Naive thymus-derived CD4-positive, alpha-beta T cell (primary cell): ENCODE measurements at regions of chr10 and their contacts with region 1.

Region 1: GRCh38 chr10:118698421-118698820 is 56.3 kb downstream of the CACUL1 start:
- DNase-seq: peak; percentile 35 to 92 (median 88)
- ATAC-seq: peak; percentile 100
- H3K4me3 ChIP-seq: peak overlapping the region; percentile 18
- H3K4me3 Mint-ChIP-seq: peak overlapping the region; percentile 71 to 93 (median 83)
- H3K27ac ChIP-seq: peak overlapping the region; percentile 57
- H3K27ac Mint-ChIP-seq: peak overlapping the region; percentile 73 to 95 (median 90)
- H3K4me1 ChIP-seq: peaks cover 15 to 40% of the 10 kb centered on the region in 2 donors
- H3K4me1 Mint-ChIP-seq: peaks cover 29 to 89% (median 74%) of the 10 kb centered on the region in 7 donors
- H3K27me3 ChIP-seq: no peaks in the 10 kb centered on the region
- H3K27me3 Mint-ChIP-seq: no peaks in the 10 kb centered on the region

Region 2: GRCh38 chr10:118412932-118413331 is 285.5 kb before region 1 on chr10:
- CTCF ChIA-PET with region 1: no interaction called
- POLR2A ChIA-PET with region 1: no interaction called
- intact Hi-C with region 1: no loop called
- DNase-seq: no peak
- ATAC-seq: no peak
- H3K4me3 ChIP-seq: no peak overlapping the region
- H3K4me3 Mint-ChIP-seq: no peak overlapping the region
- H3K27ac ChIP-seq: no peak overlapping the region
- H3K27ac Mint-ChIP-seq: no peak overlapping the region
- H3K4me1 ChIP-seq: no peaks in the 10 kb centered on the region
- H3K4me1 Mint-ChIP-seq: peaks cover 0 to 3% (median 0%) of the 10 kb centered on the region in 7 donors
- H3K27me3 ChIP-seq: no peaks in the 10 kb centered on the region
- H3K27me3 Mint-ChIP-seq: peaks cover 14 to 46% (median 31%) of the 10 kb centered on the region in 5 donors

Region 3: GRCh38 chr10:118594392-118595063 is 103.9 kb before region 1 on chr10:
- CTCF ChIA-PET with region 1: interaction called, 3 read pairs
- POLR2A ChIA-PET with region 1: no interaction called
- intact Hi-C with region 1: loop called in 1 of 2 experiments (anchors 1 kb)
- DNase-seq: peak; percentile 21 to 59 (median 35)
- ATAC-seq: peak; percentile 81
- H3K4me3 ChIP-seq: no peak overlapping the region
- H3K4me3 Mint-ChIP-seq: peak overlapping the region in 7 of 10 donors; percentile 18 to 75 (median 53)
- H3K27ac ChIP-seq: no peak overlapping the region
- H3K27ac Mint-ChIP-seq: no peak overlapping the region
- H3K4me1 ChIP-seq: peaks cover 0 to 17% of the 10 kb centered on the region in 2 donors
- H3K4me1 Mint-ChIP-seq: peaks cover 9 to 37% (median 27%) of the 10 kb centered on the region in 7 donors
- H3K27me3 ChIP-seq: peaks cover 0 to 17% of the 10 kb centered on the region in 2 donors
- H3K27me3 Mint-ChIP-seq: peaks cover 54 to 67% (median 65%) of the 10 kb centered on the region in 5 donors

Region 4: DNA sequence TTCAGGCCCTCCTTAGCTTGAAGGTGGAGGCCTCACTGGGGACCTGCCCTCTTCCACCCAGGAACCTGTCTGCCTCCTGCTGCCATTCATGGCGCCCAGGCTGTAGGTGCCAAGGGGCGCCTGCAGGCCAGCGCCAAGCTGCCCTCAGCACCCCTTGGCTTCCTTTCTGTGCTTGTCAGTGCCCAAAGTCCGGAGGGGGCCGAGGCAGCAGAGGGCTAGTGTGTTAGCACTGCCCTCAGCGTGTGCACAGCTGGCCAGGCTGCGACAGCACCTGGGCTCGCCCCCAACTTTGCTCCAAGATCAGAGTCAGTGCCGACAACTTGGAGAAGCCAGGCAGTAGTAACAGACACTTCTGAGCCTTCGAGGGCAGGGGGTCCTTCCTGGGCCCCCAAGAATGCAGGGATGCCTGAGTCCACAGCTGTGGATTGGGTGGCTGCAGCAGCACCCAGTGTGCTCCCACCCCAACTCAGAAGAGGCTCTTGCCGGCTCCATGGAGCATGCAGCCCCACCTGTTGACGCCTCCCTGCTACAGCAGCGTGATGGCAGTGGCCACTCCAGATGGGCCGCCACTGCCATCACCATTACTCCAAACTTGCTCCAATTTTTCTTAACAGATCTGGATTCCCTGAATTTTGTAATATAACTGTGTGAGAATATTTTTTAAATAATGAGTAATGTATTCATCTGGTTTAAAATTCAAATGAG is 14.7 kb after region 1 on chr10:
- CTCF ChIA-PET with region 1: interaction called, 7 read pairs
- POLR2A ChIA-PET with region 1: interaction called, 14 read pairs
- intact Hi-C with region 1: no loop called
- DNase-seq: no peak
- ATAC-seq: no peak
- H3K4me3 ChIP-seq: no peak overlapping the region
- H3K4me3 Mint-ChIP-seq: no peak overlapping the region
- H3K27ac ChIP-seq: no peak overlapping the region
- H3K27ac Mint-ChIP-seq: no peak overlapping the region
- H3K4me1 ChIP-seq: peaks cover 0 to 5% of the 10 kb centered on the region in 2 donors
- H3K4me1 Mint-ChIP-seq: peaks cover 10 to 30% (median 20%) of the 10 kb centered on the region in 7 donors
- H3K27me3 ChIP-seq: no peaks in the 10 kb centered on the region
- H3K27me3 Mint-ChIP-seq: no peaks in the 10 kb centered on the region

Region 5: DNA sequence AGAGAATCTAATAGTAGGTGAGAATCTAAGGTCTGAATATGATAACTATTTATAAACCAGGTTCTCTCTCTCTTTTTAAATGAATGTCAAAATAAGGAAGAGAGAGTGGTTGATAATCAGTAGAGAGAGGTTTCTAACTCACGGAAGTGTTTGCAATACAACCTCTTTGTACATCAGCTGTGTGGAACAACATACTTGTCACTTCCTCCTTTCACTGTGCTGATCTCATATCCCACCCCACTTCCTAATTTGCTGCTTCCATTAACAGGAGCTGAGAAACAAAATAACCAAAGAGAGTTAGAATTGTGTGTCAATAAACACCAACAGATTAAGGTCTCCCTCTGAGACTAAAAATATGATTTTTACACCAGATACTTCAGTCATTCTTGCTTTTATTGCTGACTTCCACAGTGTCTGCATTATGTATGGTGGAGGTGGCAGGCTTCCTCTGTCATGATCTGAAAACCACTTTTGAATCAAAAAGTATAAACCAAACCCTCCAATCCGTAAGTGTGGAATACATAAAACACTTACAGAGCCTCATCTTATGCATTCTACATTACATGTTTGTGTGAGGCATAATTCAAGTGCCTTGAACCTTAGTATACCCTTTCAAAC is 31.3 kb after region 1 on chr10:
- CTCF ChIA-PET with region 1: interaction called, 3 read pairs
- POLR2A ChIA-PET with region 1: no interaction called
- intact Hi-C with region 1: loop called in 1 of 2 experiments (anchors 1 kb)
- DNase-seq: peak in 7 of 9 donors; percentile 22 to 54 (median 51)
- ATAC-seq: peak; percentile 85
- H3K4me3 ChIP-seq: no peak overlapping the region
- H3K4me3 Mint-ChIP-seq: peak overlapping the region in 9 of 10 donors; percentile 26 to 79 (median 65)
- H3K27ac ChIP-seq: peak overlapping the region; percentile 14
- H3K27ac Mint-ChIP-seq: peak overlapping the region; percentile 29 to 95 (median 78)
- H3K4me1 ChIP-seq: peaks cover 39 to 58% of the 10 kb centered on the region in 2 donors
- H3K4me1 Mint-ChIP-seq: peaks cover 47 to 80% (median 69%) of the 10 kb centered on the region in 7 donors
- H3K27me3 ChIP-seq: no peaks in the 10 kb centered on the region
- H3K27me3 Mint-ChIP-seq: no peaks in the 10 kb centered on the region

Region 6: DNA sequence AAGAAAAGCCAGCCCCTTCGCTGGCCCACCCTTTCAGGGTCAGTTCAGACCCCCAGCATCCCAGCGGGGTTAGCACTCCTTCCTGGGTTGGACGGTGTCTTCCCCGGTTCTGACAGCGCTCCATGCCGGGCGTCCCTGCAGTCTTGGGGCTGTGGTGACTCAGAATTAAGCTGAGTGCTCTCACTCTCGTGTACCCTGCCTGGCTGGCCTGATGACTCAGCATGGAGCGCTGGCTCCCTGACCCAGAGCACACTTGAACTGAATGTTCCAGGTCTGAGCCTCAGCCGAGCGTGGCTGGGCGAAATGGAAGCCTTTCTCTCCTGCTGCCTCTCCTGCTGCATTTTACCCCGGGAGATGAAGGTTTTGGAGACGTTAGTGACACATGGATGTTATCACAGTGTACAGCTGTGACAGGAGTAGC is 959.8 kb after region 1 on chr10:
- CTCF ChIA-PET with region 1: no interaction called
- POLR2A ChIA-PET with region 1: no interaction called
- intact Hi-C with region 1: loop called (anchors 5 kb)
- DNase-seq: no peak
- ATAC-seq: no peak
- H3K4me3 ChIP-seq: no peak overlapping the region
- H3K4me3 Mint-ChIP-seq: peak overlapping the region in 3 of 10 donors; percentile 32 to 59 (median 37)
- H3K27ac ChIP-seq: no peak overlapping the region
- H3K27ac Mint-ChIP-seq: peak overlapping the region in 5 of 9 donors; percentile 22 to 91 (median 36)
- H3K4me1 ChIP-seq: peaks cover 22 to 48% of the 10 kb centered on the region in 2 donors
- H3K4me1 Mint-ChIP-seq: peaks cover 44 to 94% (median 87%) of the 10 kb centered on the region in 7 donors
- H3K27me3 ChIP-seq: no peaks in the 10 kb centered on the region
- H3K27me3 Mint-ChIP-seq: no peaks in the 10 kb centered on the region